Psoas muscle (tissue), 8 donors: ENCODE measurements at regions of chr11 and their contacts with region 1.

Region 1: DNA sequence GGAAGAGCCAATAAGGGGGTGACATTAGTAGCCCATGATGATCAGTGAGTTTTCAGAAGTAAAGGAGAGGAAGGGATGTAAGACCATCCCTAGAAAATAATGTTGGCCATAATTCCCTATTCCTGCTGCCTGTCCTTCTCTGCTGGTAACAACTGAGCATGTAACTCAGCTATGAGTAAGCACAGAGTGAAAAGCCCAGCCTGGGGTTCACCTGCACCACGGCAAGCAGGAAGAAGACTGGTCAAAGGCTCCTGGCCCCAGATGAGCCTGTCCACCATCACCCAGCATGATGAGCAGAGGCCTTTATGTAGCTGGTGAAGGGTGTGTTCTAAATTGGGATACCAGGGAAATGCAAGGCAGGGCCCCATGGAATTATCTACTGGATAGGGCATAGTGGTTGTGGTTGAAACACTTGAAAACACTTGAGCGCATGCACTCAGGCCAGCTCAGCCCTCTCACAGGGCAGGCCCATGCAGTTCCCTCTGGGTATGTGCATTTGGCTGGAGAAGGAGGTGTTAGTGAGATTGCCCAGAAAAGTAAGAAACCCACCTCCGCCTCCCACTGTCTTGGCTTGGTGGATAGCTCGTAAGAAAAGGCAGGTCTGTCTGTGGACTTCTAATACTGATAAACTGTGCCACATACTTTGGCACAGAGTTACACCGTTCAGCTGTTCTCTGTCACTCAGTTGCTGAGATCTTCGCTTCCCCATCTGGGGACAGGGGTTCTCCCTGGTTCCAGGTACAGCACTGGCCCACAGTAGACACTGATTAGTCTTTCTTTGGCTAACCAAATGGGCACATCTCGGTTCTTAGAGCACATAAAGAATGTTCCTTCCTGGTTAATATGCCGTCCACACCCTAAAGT is 86.8 kb downstream of the AMOTL1 start:
- DNase-seq: no peak
- ATAC-seq: peak; percentile 36 to 57 (median 42)
- H3K4me3 ChIP-seq: no peak overlapping the region
- H3K27ac ChIP-seq: peak overlapping the region; percentile 78
- H3K4me1 ChIP-seq: peaks cover 50% of the 10 kb centered on the region
- H3K27me3 ChIP-seq: no peaks in the 10 kb centered on the region
- CTCF ChIP-seq: no peak

Region 2: GRCh38 chr11:94800414-94800813 is 54.6 kb before region 1 on chr11:
- intact Hi-C with region 1: loop called in 1 of 2 experiments (anchors 5 kb)
- DNase-seq: no peak
- ATAC-seq: peak in 1 of 4 donors; percentile 32
- H3K4me3 ChIP-seq: no peak overlapping the region
- H3K27ac ChIP-seq: peak overlapping the region; percentile 92
- H3K4me1 ChIP-seq: peaks cover 95% of the 10 kb centered on the region
- H3K27me3 ChIP-seq: no peaks in the 10 kb centered on the region
- CTCF ChIP-seq: no peak

Region 3: GRCh38 chr11:94871491-94872185 is 16.6 kb after region 1 on chr11:
- intact Hi-C with region 1: loop called in 1 of 2 experiments (anchors 1 kb)
- DNase-seq: no peak
- ATAC-seq: no peak
- H3K4me3 ChIP-seq: no peak overlapping the region
- H3K27ac ChIP-seq: no peak overlapping the region
- H3K4me1 ChIP-seq: peaks cover 3% of the 10 kb centered on the region
- H3K27me3 ChIP-seq: no peaks in the 10 kb centered on the region
- CTCF ChIP-seq: no peak

Region 4: GRCh38 chr11:95531116-95531515 is 676.1 kb after region 1 on chr11:
- intact Hi-C with region 1: no loop called
- DNase-seq: no peak
- ATAC-seq: no peak
- H3K4me3 ChIP-seq: no peak overlapping the region
- H3K27ac ChIP-seq: no peak overlapping the region
- H3K4me1 ChIP-seq: no peaks in the 10 kb centered on the region
- H3K27me3 ChIP-seq: no peaks in the 10 kb centered on the region
- CTCF ChIP-seq: no peak